Sigmoid colon (tissue), 7 donors: ENCODE measurements at regions of chr17 and their contacts with region 1.

Region 1: DNA sequence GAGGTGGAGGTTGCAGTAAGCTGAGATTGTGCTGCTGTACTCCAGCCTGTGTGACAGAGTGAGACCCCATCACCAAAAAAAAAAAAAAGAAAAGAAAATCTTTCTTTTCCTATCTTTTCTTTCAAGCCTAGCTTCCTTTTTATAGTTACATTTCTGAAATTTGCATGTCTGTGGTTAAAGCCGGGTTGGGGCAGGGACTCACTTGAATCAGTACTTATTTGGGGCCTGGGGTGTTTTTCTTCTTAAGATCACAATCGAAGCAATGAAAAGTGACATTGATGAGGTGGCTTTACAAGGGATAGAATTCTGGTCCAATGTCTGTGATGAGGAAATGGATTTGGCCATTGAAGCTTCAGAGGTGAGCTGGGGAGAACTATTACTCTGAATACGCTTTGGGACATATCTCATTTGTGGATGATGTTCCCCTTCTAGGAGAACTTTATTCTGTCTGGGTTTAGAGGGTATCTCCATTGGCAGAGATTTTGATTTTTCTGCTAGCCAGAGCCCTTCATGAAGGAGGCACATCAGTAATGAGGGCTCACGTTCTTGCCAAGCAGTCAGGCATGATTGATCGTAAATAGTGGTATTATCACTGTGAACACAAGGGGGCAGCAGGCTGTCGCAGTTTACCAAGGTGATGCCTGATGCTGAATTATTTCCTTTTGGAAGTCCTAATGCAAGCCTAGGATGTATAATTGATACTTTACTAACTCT is 14.3 kb downstream of the KPNB1 start:
- DNase-seq: peak; percentile 68
- H3K4me3 ChIP-seq: no peak overlapping the region
- H3K27ac ChIP-seq: peak overlapping the region in 1 of 4 donors; percentile 19
- H3K4me1 ChIP-seq: peaks cover 0 to 18% (median 10%) of the 10 kb centered on the region in 4 donors
- H3K27me3 ChIP-seq: no peaks in the 10 kb centered on the region
- CTCF ChIP-seq: peak; percentile 41 to 68 (median 60)
- EP300 ChIP-seq: no peak
- POLR2A ChIP-seq: no peak

Region 2: DNA sequence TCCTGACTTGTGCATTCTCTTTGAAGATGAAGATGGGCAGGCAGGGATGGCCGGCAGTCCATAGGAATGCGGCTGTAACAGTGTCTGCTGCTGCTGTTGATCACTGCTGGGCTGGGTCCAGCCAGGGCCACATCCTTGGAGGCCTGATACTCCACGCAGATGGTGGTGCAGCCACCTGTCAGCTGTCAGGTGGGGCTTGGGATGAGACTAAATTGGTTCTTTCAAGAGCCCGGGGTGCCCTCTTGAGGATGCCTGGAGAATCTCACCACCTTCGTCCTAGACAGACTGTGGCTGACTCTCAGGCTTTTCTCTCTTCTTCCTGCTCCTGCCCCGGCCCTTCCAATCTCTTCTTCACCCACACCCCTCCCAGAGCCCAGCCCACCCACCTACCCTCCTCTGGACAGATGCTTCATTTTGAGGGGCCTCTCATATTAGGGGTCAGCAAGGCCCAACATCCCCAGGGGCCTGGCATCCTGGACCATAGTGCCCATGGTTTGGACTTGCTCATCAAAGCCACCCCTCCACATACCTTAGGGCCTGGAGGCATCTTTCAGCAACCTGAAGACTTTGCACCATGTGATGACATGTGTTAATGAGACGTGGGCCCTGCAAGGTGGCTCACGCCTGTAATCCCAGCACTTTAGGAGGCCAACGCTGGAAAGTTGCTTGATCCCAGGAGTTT is 138.4 kb after region 1 on chr17:
- intact Hi-C with region 1: loop called (anchors 5 kb)
- DNase-seq: no peak
- H3K4me3 ChIP-seq: no peak overlapping the region
- H3K27ac ChIP-seq: no peak overlapping the region
- H3K4me1 ChIP-seq: no peaks in the 10 kb centered on the region
- H3K27me3 ChIP-seq: no peaks in the 10 kb centered on the region
- CTCF ChIP-seq: peak in 3 of 4 experiments; percentile 15 to 32 (median 26)
- EP300 ChIP-seq: no peak
- POLR2A ChIP-seq: no peak